PC-3 (cell line): ENCODE measurements at regions of chr5 and their contacts with region 1.

Region 1: GRCh38 chr5:172798422-172799200 is 27.6 kb upstream of the DUSP1 start:
- DNase-seq: peak; percentile 91
- ATAC-seq: peak; percentile 78
- H3K4me3 ChIP-seq: no peak overlapping the region
- H3K27ac ChIP-seq: peak overlapping the region; percentile 94
- H3K4me1 ChIP-seq: peaks cover 65% of the 10 kb centered on the region
- H3K27me3 ChIP-seq: no peaks in the 10 kb centered on the region
- CTCF ChIP-seq: no peak

Region 2: GRCh38 chr5:172688349-172689217 is 110.0 kb before region 1 on chr5:
- CTCF ChIA-PET with region 1: no interaction called
- POLR2A ChIA-PET with region 1: no interaction called
- intact Hi-C with region 1: no loop called
- DNase-seq: peak; percentile 63
- ATAC-seq: peak; percentile 47; the same call in 1 of the 2 replicates
- H3K4me3 ChIP-seq: no peak overlapping the region
- H3K27ac ChIP-seq: peak overlapping the region; percentile 12
- H3K4me1 ChIP-seq: peaks cover 13% of the 10 kb centered on the region
- H3K27me3 ChIP-seq: no peaks in the 10 kb centered on the region
- CTCF ChIP-seq: no peak

Region 3: GRCh38 chr5:172777881-172778814 is 20.5 kb before region 1 on chr5:
- CTCF ChIA-PET with region 1: no interaction called
- POLR2A ChIA-PET with region 1: interaction called, 6 read pairs
- intact Hi-C with region 1: loop called (anchors 1 kb)
- DNase-seq: peak; percentile 92
- ATAC-seq: peak; percentile 70
- H3K4me3 ChIP-seq: peak overlapping the region; percentile 50
- H3K27ac ChIP-seq: peak overlapping the region; percentile 95
- H3K4me1 ChIP-seq: peaks cover 64% of the 10 kb centered on the region
- H3K27me3 ChIP-seq: no peaks in the 10 kb centered on the region
- CTCF ChIP-seq: no peak